Heart left ventricle (tissue), 16 donors: ENCODE measurements at regions of chr3 and their contacts with region 1.

Region 1: DNA sequence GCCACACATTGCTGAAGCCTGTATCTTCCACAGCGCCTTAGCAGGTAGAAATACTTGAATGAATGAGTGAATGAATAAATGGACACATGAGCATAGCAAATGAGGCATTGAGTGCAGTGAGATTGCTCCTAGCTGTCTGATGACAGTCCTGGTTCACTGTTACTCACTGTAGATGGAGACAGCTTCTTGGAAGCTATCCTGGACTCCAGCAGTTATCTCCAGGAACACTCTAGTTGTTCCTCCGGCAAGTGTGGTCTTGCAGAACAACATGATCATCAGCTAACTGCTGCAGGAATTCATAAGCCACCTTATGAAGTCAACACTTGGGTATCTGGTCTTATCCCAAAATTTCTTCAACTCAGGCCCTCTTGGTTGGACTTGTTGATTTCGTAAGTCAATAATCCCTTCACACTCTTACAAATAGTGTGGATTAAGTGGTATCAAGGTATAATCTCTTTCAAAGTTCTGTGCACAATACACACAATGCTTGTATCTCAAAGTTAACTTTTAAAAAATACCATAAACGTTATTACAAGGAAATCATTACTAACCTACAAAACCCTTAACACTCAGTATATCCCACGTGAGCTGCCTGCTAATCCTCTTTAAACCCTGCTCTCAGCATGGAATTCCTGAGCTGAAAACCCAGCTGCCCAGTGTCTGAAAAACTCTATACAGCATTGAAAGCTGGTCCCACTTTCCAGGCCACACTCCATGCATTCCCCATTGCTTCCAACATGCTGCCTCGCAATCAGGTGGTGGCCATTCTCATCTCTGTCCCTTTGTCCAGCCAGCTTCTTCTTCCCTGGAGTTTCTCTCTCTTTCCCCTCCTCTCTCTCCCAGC is 14.4 kb upstream of the ZBTB38 start:
- DNase-seq: no peak
- ATAC-seq: peak in 3 of 4 donors; percentile 52 to 88 (median 69)
- H3K4me3 ChIP-seq: no peak overlapping the region
- H3K27ac ChIP-seq: no peak overlapping the region
- H3K4me1 ChIP-seq: no peaks in the 10 kb centered on the region
- H3K27me3 ChIP-seq: no peaks in the 10 kb centered on the region
- CTCF ChIP-seq: no peak
- POLR2A ChIP-seq: no peak

Region 2: DNA sequence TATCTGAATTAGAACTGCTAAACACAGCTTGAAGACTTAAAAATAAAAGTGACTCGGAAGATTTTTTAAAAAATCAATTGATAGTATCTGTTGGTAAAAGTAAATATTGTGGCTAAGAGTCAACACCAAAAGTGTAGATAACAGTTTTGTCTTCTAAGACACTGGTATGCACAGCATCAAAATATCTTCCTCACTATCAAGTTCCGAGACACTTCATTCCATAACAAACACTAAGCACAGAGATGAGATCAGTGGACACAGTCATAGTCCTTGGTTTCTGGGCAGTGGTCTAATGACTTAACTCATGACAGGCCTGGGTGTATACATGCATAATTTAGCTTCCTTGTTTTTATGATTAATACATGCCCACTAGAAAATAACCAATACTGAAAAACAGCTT is 59.0 kb before region 1 on chr3:
- intact Hi-C with region 1: no loop called
- DNase-seq: no peak
- ATAC-seq: peak in 2 of 4 donors; percentile 41 to 47
- H3K4me3 ChIP-seq: peak overlapping the region in 10 of 12 donors; percentile 17 to 58 (median 39)
- H3K27ac ChIP-seq: peak overlapping the region in 10 of 12 donors; percentile 5 to 67 (median 34)
- H3K4me1 ChIP-seq: peaks cover 0 to 39% (median 25%) of the 10 kb centered on the region in 12 donors
- H3K27me3 ChIP-seq: no peaks in the 10 kb centered on the region
- CTCF ChIP-seq: no peak
- POLR2A ChIP-seq: no peak

Region 3: GRCh38 chr3:141316851-141317250 is 37.0 kb before region 1 on chr3:
- intact Hi-C with region 1: loop called in 4 of 10 experiments (anchors 2 to 5 kb)
- DNase-seq: no peak
- ATAC-seq: no peak
- H3K4me3 ChIP-seq: no peak overlapping the region
- H3K27ac ChIP-seq: no peak overlapping the region
- H3K4me1 ChIP-seq: peaks cover 0 to 22% (median 7%) of the 10 kb centered on the region in 12 donors
- H3K27me3 ChIP-seq: no peaks in the 10 kb centered on the region
- CTCF ChIP-seq: no peak
- POLR2A ChIP-seq: no peak

Region 4: GRCh38 chr3:141553055-141553454 is 199.2 kb after region 1 on chr3:
- intact Hi-C with region 1: loop called in 2 of 10 experiments (anchors 5 to 10 kb)
- DNase-seq: no peak
- ATAC-seq: peak in 2 of 4 donors; percentile 34 to 51
- H3K4me3 ChIP-seq: no peak overlapping the region
- H3K27ac ChIP-seq: peak overlapping the region in 1 of 12 donors; percentile 53
- H3K4me1 ChIP-seq: peaks cover 0 to 42% (median 1%) of the 10 kb centered on the region in 12 donors
- H3K27me3 ChIP-seq: no peaks in the 10 kb centered on the region
- CTCF ChIP-seq: no peak
- POLR2A ChIP-seq: no peak